PC-9 (cell line): ENCODE measurements at regions of chr15 and their contacts with region 1.

Region 1: GRCh38 chr15:90869601-90870353 is 1.4 kb downstream of the FURIN start:
- DNase-seq: peak; percentile 83
- H3K4me3 ChIP-seq: peak overlapping the region; percentile 73; the same call in 1 of the 2 replicates
- H3K27ac ChIP-seq: peak overlapping the region; percentile 72
- H3K4me1 ChIP-seq: peaks cover 66% of the 10 kb centered on the region
- H3K27me3 ChIP-seq: no peaks in the 10 kb centered on the region
- CTCF ChIP-seq: no peak

Region 2: GRCh38 chr15:90660195-90660998 is 209.4 kb before region 1 on chr15:
- CTCF ChIA-PET with region 1: no interaction called
- POLR2A ChIA-PET with region 1: no interaction called
- intact Hi-C with region 1: loop called (anchors 5 kb)
- DNase-seq: peak; percentile 69 to 85
- H3K4me3 ChIP-seq: peak overlapping the region; percentile 31; the same call in 1 of the 2 replicates
- H3K27ac ChIP-seq: peak overlapping the region; percentile 55
- H3K4me1 ChIP-seq: peaks cover 19% of the 10 kb centered on the region
- H3K27me3 ChIP-seq: no peaks in the 10 kb centered on the region
- CTCF ChIP-seq: no peak

Region 3: DNA sequence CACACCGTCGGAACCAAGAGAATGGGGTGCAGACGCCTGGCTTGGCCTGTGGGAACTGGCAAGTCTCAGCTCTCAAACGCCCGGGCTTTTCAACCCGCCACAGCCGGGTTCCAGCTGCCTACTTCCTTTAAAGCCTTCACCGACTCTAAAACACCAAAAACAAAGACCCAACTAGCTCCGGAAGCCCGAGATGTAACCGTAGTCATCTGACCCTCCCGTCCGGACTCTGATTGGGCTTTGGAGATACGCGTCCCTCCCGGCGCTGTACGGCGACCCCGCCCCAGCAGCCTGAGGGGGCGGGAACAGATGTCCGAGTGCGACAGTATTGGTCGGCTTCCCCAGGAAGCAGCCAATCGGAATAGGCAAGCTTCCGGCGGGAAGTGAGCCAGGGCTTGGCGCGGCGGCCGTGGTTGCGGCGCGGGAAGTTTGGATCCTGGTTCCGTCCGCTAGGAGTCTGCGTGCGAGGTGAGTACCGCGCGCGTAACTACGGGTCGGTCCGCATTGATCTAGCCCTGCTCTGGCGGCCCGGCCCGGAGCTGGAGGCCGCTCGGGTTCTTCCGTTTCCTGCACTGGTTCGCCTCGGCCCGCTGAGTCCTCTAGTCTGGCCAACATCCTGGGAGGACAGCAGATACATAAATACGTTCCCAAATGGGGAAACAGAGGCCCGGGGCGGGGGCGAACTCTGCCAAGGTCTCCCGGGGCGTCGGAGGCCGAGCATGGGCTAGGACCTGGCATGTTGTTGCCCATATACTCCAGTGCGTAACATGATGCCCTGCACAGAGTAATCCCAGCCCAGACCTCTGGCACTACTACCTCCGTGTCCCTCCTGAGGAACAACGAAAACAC is 152.6 kb before region 1 on chr15 and contains the start of gene BLM:
- CTCF ChIA-PET with region 1: no interaction called
- POLR2A ChIA-PET with region 1: no interaction called
- intact Hi-C with region 1: loop called (anchors 5 kb)
- DNase-seq: peak; percentile 88 to 95
- H3K4me3 ChIP-seq: peak within 1 kb of the TSS; percentile 74
- H3K27ac ChIP-seq: peak within 1 kb of the TSS; percentile 50; the same call in 1 of the 2 replicates
- H3K4me1 ChIP-seq: peaks cover 12% of the 10 kb centered on the region
- H3K27me3 ChIP-seq: no peaks in the 10 kb centered on the region
- CTCF ChIP-seq: no peak; the same call in 1 of the 2 replicates
- total RNA-seq, gene BLM: 15.1 and 19.1 TPM in 2 replicates